Heart right ventricle (tissue), 16 donors: ENCODE measurements at regions of chr20 and their contacts with region 1.

Region 1: GRCh38 chr20:41392871-41393704 is 26.5 kb upstream of the EMILIN3 start:
- DNase-seq: peak; percentile 74 to 86
- ATAC-seq: peak; percentile 72 to 95 (median 88)
- H3K4me3 ChIP-seq: no peak overlapping the region
- H3K27ac ChIP-seq: peak overlapping the region in 9 of 10 donors; percentile 1 to 81 (median 58)
- H3K4me1 ChIP-seq: peaks cover 7 to 57% (median 32%) of the 10 kb centered on the region in 9 donors
- H3K27me3 ChIP-seq: no peaks in the 10 kb centered on the region
- CTCF ChIP-seq: no peak

Region 2: DNA sequence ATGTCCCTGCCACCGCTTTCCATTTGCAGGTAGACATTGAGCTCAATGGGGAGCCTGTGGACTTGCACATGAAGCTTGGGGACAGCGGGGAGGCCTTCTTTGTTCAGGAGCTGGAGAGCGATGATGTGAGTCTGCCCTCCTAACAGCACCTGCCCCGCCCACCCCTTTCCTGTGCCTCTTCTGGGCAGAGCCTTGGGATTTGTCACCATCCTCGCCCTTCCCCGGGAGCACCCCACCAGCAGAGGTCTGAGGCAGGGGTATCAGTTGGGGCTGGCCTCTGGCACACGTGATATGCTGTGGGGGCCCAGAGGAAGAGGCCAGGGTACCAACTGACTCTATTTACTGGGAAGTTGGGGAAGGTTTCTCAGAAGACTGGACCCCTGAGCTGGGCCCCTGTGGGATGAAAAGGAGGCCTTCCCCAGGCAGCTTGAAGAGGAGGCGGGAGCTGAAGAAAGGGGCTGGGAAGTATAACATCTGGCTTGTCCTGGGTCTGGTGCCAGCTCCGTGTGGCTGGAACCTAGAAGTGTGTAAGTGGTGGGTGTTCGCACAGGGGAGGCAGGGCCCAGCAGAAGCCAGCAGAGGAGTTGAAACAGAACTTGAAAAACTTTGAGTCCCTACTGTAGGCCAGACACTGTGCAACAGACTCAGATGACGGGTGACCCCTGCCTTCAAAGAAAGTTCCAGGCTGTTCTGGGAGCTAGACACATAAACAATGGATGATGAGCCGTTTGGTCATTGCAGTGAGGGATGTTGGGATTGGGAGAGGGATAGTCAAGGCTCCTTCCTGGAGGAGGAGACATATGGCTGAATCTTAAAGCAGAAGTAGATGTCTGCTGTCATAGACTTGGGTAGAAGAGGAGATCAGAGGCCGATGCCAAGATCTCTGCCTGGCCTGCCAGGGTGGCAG is 45.3 kb before region 1 on chr20:
- intact Hi-C with region 1: loop called in 1 of 10 experiments (anchors 5 kb)
- DNase-seq: no peak
- ATAC-seq: peak; percentile 12 to 66 (median 52)
- H3K4me3 ChIP-seq: no peak overlapping the region
- H3K27ac ChIP-seq: peak overlapping the region in 4 of 10 donors; percentile 7 to 39 (median 26)
- H3K4me1 ChIP-seq: peaks cover 0 to 8% (median 0%) of the 10 kb centered on the region in 9 donors
- H3K27me3 ChIP-seq: no peaks in the 10 kb centered on the region
- CTCF ChIP-seq: no peak

Region 3: DNA sequence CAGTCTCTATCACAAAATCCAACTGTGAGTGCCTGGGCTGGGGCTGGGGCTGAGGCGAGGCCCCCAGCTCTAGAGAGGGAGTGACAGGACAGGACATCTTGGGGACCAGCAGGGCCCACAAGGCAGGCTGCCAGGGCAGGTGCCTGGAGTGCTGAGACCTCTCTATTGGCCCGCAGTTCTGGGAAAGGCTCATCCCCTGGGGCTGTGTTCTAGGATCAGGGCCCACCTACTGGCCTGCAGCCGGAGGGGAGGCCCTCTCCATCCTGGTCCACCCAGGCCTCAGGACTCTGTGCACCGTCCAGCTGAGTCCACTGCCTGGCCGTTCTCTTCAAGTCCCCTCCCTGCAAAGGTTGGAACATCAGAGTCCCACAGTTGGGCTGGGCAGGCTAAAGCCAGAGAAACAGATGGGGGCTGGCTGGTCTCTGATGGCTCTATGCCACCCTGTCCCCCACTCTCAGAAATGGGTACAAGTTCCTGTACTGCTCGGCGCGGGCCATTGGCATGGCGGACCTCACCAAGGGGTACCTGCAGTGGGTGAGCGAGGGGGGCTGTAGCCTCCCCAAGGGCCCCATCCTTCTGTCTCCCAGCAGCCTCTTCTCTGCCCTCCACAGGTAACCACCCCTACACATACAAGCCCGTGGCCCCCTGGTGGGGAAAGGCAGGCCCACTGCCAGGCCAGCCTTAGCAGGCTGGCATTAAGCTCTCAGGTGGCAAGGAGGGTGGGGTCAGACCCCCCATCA is 35.5 kb before region 1 on chr20:
- intact Hi-C with region 1: loop called in 1 of 10 experiments (anchors 5 kb)
- DNase-seq: no peak
- ATAC-seq: peak in 2 of 8 donors; percentile 11 to 18
- H3K4me3 ChIP-seq: no peak overlapping the region
- H3K27ac ChIP-seq: peak overlapping the region in 1 of 10 donors; percentile 16
- H3K4me1 ChIP-seq: peaks cover 0 to 43% (median 5%) of the 10 kb centered on the region in 9 donors
- H3K27me3 ChIP-seq: no peaks in the 10 kb centered on the region
- CTCF ChIP-seq: no peak

Region 4: DNA sequence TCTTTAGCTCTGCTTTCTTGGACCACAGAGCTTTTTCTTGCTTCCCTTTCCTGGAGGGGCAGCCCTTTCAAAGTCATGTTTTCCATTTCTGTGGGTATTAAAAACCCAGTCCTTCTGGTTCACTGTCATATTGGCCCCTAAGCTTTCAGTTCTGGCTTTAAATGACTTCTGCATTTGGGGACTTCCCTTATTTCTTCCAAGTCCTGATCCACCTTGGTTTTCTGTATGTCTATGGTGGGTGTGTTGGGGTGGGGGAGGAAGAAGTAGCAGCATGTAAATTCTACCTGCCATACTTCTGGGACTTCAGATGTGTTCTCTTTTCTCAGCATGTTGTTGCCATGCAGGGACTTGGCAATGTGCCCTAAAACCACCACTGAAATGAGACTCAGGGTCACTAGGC is 50.6 kb after region 1 on chr20:
- intact Hi-C with region 1: no loop called
- DNase-seq: no peak
- ATAC-seq: no peak
- H3K4me3 ChIP-seq: no peak overlapping the region
- H3K27ac ChIP-seq: no peak overlapping the region
- H3K4me1 ChIP-seq: no peaks in the 10 kb centered on the region
- H3K27me3 ChIP-seq: no peaks in the 10 kb centered on the region
- CTCF ChIP-seq: no peak